ENCODE measurements at regions of chr11 and their contacts with region 1.

Region 1: GRCh38 chr11:111446404-111447111 is 65.6 kb downstream of the BTG4 start:
- DNase-seq: peak; percentile 83 to 87
- ATAC-seq: peak; percentile 96 to 99
- H3K4me3 ChIP-seq: no peak overlapping the region
- H3K27ac ChIP-seq: no peak overlapping the region
- H3K4me1 ChIP-seq: no peaks in the 10 kb centered on the region
- CTCF ChIP-seq: peak; percentile 68
- EP300 ChIP-seq: no peak
- POLR2A ChIP-seq: no peak
- RAD21 ChIP-seq: peak; percentile 84 to 93

Region 2: GRCh38 chr11:111283945-111284481 is 162.5 kb before region 1 on chr11:
- CTCF ChIA-PET with region 1: interaction called, 52 read pairs
- POLR2A ChIA-PET with region 1: no interaction called
- DNase-seq: no peak
- ATAC-seq: no peak
- H3K4me3 ChIP-seq: no peak overlapping the region
- H3K27ac ChIP-seq: no peak overlapping the region
- H3K4me1 ChIP-seq: no peaks in the 10 kb centered on the region
- CTCF ChIP-seq: no peak
- EP300 ChIP-seq: no peak
- POLR2A ChIP-seq: no peak
- RAD21 ChIP-seq: no peak

Region 3: GRCh38 chr11:111422494-111423249 is 23.9 kb before region 1 on chr11:
- CTCF ChIA-PET with region 1: interaction called, 14 read pairs
- POLR2A ChIA-PET with region 1: no interaction called
- DNase-seq: peak; percentile 6 to 55
- ATAC-seq: peak; percentile 93 to 98
- H3K4me3 ChIP-seq: no peak overlapping the region
- H3K27ac ChIP-seq: no peak overlapping the region
- H3K4me1 ChIP-seq: no peaks in the 10 kb centered on the region
- CTCF ChIP-seq: peak; percentile 59
- EP300 ChIP-seq: no peak
- POLR2A ChIP-seq: no peak
- RAD21 ChIP-seq: peak; percentile 87 to 91

Region 4: DNA sequence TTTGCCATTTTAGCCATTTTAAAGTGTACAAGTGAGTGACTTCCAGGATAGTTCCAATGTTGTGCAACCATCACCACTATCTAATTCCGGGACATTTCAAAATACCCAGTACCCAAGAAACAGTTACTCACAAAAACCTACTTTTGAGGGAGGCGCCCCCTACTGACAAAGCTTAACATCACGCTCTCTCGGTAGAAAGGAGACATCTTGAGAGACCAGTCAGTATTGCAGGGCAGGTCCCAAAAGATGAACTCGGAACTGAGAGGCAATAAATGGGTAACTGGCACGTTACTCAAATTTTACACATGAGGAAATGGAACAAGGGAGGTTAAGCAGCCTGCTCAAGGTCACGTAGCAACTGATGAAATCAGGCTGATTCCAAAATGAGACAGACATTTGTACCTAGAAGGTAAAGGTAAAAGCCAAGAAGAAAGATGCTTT is 17.5 kb before region 1 on chr11:
- CTCF ChIA-PET with region 1: interaction called, 14 read pairs
- POLR2A ChIA-PET with region 1: no interaction called
- DNase-seq: peak in 1 of 2 experiments; percentile 63
- ATAC-seq: peak in 1 of 2 experiments; percentile 72; a peak in 3 of 6 replicates
- H3K4me3 ChIP-seq: no peak overlapping the region
- H3K27ac ChIP-seq: no peak overlapping the region
- H3K4me1 ChIP-seq: no peaks in the 10 kb centered on the region
- CTCF ChIP-seq: peak; percentile 54
- EP300 ChIP-seq: no peak
- POLR2A ChIP-seq: no peak
- RAD21 ChIP-seq: peak; percentile 27 to 31; a peak in 4 of 5 replicates

Region 5: GRCh38 chr11:111460856-111461255 is 14.3 kb after region 1 on chr11:
- CTCF ChIA-PET with region 1: interaction called, 25 read pairs
- POLR2A ChIA-PET with region 1: interaction called, 3 read pairs
- DNase-seq: no peak
- ATAC-seq: no peak
- H3K4me3 ChIP-seq: no peak overlapping the region
- H3K27ac ChIP-seq: no peak overlapping the region
- H3K4me1 ChIP-seq: no peaks in the 10 kb centered on the region
- CTCF ChIP-seq: no peak
- EP300 ChIP-seq: no peak
- POLR2A ChIP-seq: no peak
- RAD21 ChIP-seq: no peak

Region 6: GRCh38 chr11:111479666-111480065 is 33.1 kb after region 1 on chr11:
- CTCF ChIA-PET with region 1: no interaction called
- POLR2A ChIA-PET with region 1: no interaction called
- DNase-seq: no peak
- ATAC-seq: no peak
- H3K4me3 ChIP-seq: no peak overlapping the region
- H3K27ac ChIP-seq: no peak overlapping the region
- H3K4me1 ChIP-seq: no peaks in the 10 kb centered on the region
- CTCF ChIP-seq: no peak
- EP300 ChIP-seq: no peak
- POLR2A ChIP-seq: no peak
- RAD21 ChIP-seq: no peak

Region 7: GRCh38 chr11:111538407-111539114 is 92.0 kb after region 1 on chr11:
- CTCF ChIA-PET with region 1: no interaction called
- POLR2A ChIA-PET with region 1: no interaction called
- DNase-seq: no peak
- ATAC-seq: no peak; a peak in 1 of 6 replicates
- H3K4me3 ChIP-seq: no peak overlapping the region
- H3K27ac ChIP-seq: no peak overlapping the region
- H3K4me1 ChIP-seq: peaks cover 5% of the 10 kb centered on the region; the same call in 1 of the 3 replicates
- CTCF ChIP-seq: no peak
- EP300 ChIP-seq: no peak
- POLR2A ChIP-seq: no peak
- RAD21 ChIP-seq: no peak

Region 8: GRCh38 chr11:111663820-111664219 is 217.3 kb after region 1 on chr11:
- CTCF ChIA-PET with region 1: no interaction called
- POLR2A ChIA-PET with region 1: no interaction called
- DNase-seq: no peak
- ATAC-seq: no peak
- H3K4me3 ChIP-seq: no peak overlapping the region
- H3K27ac ChIP-seq: no peak overlapping the region
- H3K4me1 ChIP-seq: no peaks in the 10 kb centered on the region
- CTCF ChIP-seq: no peak
- EP300 ChIP-seq: no peak
- POLR2A ChIP-seq: no peak
- RAD21 ChIP-seq: no peak